Common myeloid progenitor, CD34-positive (primary cell): ENCODE measurements at regions of chr22 and their contacts with region 1.

Region 1: DNA sequence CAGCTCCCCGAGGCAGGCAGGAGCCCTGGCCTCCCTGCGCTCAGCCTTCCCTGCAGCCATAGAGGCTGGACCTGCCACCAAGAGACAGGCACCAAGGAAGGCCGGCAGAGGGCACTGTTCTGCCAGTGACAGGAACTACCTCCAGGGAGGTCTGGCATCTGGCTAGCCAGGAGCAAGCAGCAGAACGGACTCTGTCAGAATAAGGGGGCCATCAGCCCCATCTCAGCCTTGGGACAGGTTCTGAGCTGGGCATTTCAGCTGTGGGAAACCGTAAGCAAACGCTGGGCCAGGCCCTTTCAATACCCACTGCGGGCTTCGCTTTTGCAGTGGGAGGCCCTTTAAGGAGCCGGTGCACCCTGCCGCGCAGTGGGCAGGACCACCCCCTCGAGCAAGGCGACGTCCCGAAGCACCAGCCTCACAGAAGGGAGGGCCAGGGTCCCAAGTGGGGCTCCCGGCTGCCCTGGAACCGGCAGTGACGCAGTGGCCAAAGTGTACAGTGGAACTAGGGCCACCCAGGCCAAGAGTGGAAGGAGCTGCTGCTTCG is 18.2 kb downstream of the IFT27 start:
- DNase-seq: peak; percentile 76 to 85 (median 80)
- H3K4me3 ChIP-seq: no peak overlapping the region
- H3K27ac ChIP-seq: no peak overlapping the region
- H3K4me1 ChIP-seq: peaks cover 0 to 8% (median 0%) of the 10 kb centered on the region in 4 experiments
- H3K27me3 ChIP-seq: peaks cover 0 to 18% (median 8%) of the 10 kb centered on the region in 5 experiments

Region 2: DNA sequence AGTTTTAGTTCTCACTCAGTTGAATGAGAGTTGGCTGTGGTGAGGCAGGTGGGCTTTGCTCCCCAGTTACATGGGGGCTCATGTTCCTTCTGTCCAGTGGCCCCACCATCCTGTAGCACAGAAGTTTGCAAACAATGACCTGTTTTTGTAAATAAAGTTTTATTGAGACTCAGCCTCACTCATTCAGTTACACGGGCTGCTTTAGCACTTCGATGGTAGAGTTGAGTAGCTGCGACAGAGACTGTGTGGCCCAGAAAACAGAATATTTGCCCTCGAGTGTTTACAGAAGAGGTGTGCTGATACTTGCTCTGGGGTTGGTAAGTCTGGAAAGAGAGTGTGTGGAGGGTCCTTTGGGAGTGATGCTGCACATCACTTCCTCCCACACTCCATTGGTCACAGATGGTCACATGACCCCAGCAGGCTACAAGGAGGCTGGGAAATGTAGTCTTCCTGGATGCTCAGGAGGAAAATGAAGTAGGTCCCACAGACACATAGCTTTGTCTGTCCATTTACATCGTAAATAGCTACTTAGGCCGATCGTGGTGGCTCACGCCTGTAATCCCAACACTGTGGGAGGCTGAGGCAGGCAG is 16.4 kb before region 1 on chr22:
- CTCF ChIA-PET with region 1: interaction called, 33 read pairs
- POLR2A ChIA-PET with region 1: no interaction called
- DNase-seq: no peak
- H3K4me3 ChIP-seq: no peak overlapping the region
- H3K27ac ChIP-seq: no peak overlapping the region
- H3K4me1 ChIP-seq: no peaks in the 10 kb centered on the region
- H3K27me3 ChIP-seq: peaks cover 0 to 18% (median 8%) of the 10 kb centered on the region in 5 experiments

Region 3: DNA sequence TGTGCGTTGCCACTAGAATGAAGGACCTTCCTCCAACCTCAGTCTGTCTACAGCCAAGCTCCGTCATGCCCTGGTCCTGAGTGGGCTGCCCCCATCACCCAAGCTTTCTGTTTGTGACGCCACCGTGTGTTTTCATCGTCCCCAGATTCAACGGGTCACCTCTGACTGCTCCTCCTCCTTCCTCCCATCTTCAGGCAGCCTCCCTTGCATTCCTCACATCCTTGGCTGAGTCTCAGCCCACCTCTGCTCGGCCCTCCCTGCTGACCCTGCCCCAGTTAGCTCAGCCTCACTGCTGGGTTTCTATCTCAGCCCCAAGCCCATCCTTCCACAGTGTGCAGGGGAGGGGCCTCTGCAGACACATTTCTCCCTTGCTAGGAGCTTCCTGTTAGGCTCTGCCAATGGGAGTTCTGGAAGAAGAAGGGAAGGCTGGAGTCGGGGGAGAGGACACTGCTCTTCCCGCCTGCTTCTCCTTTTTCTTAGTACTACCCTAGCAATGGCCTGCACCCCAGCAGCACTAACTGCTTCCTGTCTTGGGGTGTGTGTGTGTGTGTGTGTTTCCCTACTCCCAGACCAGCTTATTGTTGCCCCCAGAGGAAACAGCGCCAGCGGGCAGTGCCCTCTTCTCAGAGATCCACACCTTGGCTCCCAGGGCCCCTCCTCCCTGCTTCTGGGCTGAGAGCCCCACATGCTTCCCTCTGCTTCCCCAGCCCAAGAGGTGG is 12.9 kb after region 1 on chr22:
- CTCF ChIA-PET with region 1: interaction called, 54 read pairs
- POLR2A ChIA-PET with region 1: no interaction called
- DNase-seq: peak in 2 of 3 donors; percentile 59 to 64
- H3K4me3 ChIP-seq: no peak overlapping the region
- H3K27ac ChIP-seq: no peak overlapping the region
- H3K4me1 ChIP-seq: peaks cover 0 to 32% (median 26%) of the 10 kb centered on the region in 4 experiments
- H3K27me3 ChIP-seq: no peaks in the 10 kb centered on the region